HepG2 (cell line): ENCODE measurements at regions of chr17 and their contacts with region 1.

Region 1: GRCh38 chr17:82236142-82236981 is 7.5 kb downstream of the SLC16A3 start:
- DNase-seq: peak; percentile 92
- ATAC-seq: peak; percentile 52
- H3K4me3 ChIP-seq: peak overlapping the region in 1 of 3 experiments; percentile 27; a peak in 1 of 6 replicates
- H3K27ac ChIP-seq: peak overlapping the region; percentile 59
- H3K4me1 ChIP-seq: peaks cover 94% of the 10 kb centered on the region
- H3K27me3 ChIP-seq: no peaks in the 10 kb centered on the region; a peak in 1 of 5 replicates
- CTCF ChIP-seq: peak; percentile 96
- EP300 ChIP-seq: peak in 1 of 2 experiments; percentile 53; a peak in 2 of 4 replicates
- POLR2A ChIP-seq: peak in 1 of 2 experiments; percentile 40; a peak in 1 of 4 replicates
- RAD21 ChIP-seq: peak; percentile 95

Region 2: DNA sequence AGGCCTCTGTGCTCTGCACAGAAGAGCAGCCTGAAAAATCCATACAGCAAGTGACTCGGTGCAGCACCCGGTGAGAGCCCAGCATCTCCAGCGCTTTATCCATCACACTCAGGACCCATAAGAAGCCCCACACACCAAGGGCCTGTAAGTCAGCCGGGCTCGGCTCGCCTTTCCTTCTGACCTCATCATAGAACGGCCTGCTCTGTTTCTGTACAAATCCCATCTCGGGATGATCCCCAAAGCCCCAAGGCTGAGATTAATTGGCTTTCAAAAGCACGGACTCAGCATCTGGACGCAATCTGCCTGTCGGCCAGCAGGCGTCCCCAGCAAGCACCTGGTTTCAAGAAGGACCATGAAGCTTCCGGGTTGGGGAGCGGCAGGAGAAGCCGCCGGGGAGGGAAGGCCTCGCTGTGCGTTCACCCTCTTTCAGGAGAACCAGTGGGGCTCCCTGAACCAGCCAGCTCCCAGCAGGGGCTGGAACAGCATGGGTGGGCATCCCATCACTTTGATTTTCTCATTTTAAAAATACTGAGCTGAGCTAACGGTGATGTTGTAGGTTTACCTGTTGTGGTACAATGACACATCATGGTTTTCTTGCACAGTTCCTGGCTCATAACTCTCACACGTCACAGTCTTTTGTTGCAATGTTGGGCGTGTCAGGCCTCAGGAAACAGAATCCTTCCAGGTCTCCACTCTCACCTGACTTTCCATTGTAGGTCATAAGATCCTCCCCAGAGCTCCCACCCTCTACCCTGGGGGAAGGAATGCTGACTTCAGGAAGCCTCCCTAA is 30.4 kb before region 1 on chr17:
- CTCF ChIA-PET with region 1: interaction called, 7 read pairs
- POLR2A ChIA-PET with region 1: interaction called, 117 read pairs
- in situ Hi-C with region 1: no loop called
- intact Hi-C with region 1: loop called (anchors 2 kb)
- DNase-seq: peak; percentile 84
- ATAC-seq: peak; percentile 91
- H3K4me3 ChIP-seq: peak overlapping the region in 1 of 3 experiments; percentile 33; a peak in 2 of 6 replicates
- H3K27ac ChIP-seq: peak overlapping the region; percentile 26
- H3K4me1 ChIP-seq: peaks cover 20% of the 10 kb centered on the region
- H3K27me3 ChIP-seq: no peaks in the 10 kb centered on the region
- CTCF ChIP-seq: peak; percentile 98
- EP300 ChIP-seq: no peak
- POLR2A ChIP-seq: peak; percentile 66 to 88
- RAD21 ChIP-seq: peak; percentile 89

Region 3: DNA sequence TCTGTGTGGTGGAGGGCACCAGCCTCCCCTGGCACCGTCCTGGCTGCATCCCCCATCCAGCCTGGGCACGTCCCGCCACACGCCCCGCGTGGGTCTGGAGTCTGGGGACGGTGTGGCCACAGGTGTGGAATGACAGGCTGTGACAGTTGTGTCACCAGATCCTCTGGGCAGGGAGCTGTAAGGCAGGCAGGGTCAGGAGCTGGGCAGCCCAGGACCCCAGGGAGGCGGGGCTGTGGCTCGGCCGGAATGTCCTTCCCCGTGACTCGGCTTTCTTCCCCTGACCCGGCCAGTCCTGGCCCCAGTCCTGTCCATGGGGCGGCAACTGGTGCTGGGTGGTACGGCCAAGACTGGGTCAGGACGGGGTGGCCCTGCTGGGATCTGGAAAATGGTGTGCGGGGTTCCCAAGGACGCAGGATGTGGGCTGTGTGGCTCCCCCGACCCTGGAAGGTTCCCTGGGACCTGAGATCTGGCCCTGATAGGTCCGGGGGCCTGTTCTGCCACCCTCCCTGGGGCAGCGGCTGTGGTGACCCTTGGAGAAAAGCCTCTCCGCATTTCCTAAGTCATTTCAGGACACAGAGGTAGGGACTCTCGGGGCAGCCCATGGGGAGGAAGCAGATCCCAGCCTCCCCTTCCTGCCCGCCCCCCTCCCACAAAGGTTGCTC is 10.9 kb before region 1 on chr17:
- CTCF ChIA-PET with region 1: no interaction called
- POLR2A ChIA-PET with region 1: interaction called, 117 read pairs
- in situ Hi-C with region 1: no loop called
- intact Hi-C with region 1: no loop called
- DNase-seq: no peak
- ATAC-seq: peak; percentile 26
- H3K4me3 ChIP-seq: peak overlapping the region; percentile 56 to 77 (median 60)
- H3K27ac ChIP-seq: peak overlapping the region; percentile 19
- H3K4me1 ChIP-seq: peaks cover 61% of the 10 kb centered on the region
- H3K27me3 ChIP-seq: no peaks in the 10 kb centered on the region
- CTCF ChIP-seq: peak; percentile 6; the same call in 1 of the 2 replicates
- EP300 ChIP-seq: no peak
- POLR2A ChIP-seq: peak in 1 of 2 experiments; percentile 32; a peak in 1 of 4 replicates
- RAD21 ChIP-seq: no peak

Region 4: DNA sequence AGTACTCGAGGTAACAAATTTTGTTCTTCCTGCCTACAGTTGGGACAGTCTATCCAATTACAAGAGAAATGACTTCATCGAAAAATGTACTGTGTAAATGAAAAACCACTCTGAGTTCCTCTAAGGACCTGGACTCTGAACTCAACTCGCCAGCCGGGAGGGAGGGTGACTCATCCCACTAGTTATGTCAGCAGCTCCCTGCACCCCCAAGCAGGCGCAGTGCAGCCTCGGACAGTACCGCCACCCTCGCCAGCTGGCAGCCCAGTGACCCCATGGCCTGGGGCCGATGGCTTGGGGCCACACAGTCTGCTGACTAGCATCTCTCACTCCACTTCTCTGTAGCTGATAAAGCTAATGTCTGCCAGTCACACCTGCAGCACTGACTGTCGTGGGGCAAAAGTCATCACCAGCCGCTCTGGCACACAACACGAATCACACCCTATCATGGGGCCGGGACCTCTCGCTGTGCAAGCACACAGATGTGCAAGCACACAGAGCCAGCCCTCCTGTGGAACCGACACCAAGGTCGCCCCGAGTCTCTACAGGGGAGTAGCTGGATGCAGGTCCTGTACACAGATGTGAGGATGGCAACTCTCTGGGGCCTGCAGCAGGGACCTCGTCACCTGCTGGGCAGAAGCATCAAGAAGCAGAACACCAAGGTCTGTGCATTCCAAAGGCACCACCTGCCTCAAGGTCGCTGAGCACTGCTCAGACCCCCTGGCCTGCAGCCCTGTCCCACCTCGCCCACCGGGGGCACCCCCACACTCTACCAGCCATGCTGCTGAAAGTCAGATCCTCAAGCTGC is 31.4 kb after region 1 on chr17:
- CTCF ChIA-PET with region 1: interaction called, 3 read pairs
- POLR2A ChIA-PET with region 1: interaction called, 65 read pairs
- in situ Hi-C with region 1: no loop called
- intact Hi-C with region 1: no loop called
- DNase-seq: peak; percentile 99
- ATAC-seq: peak; percentile 88
- H3K4me3 ChIP-seq: peak overlapping the region; percentile 12 to 65 (median 48); a peak in 5 of 6 replicates
- H3K27ac ChIP-seq: peak overlapping the region; percentile 90
- H3K4me1 ChIP-seq: peaks cover 70% of the 10 kb centered on the region
- H3K27me3 ChIP-seq: no peaks in the 10 kb centered on the region; a peak in 1 of 5 replicates
- CTCF ChIP-seq: peak; percentile 46
- EP300 ChIP-seq: peak; percentile 84 to 90
- POLR2A ChIP-seq: peak in 1 of 2 experiments; percentile 44; a peak in 3 of 4 replicates
- RAD21 ChIP-seq: peak; percentile 44

Region 5: DNA sequence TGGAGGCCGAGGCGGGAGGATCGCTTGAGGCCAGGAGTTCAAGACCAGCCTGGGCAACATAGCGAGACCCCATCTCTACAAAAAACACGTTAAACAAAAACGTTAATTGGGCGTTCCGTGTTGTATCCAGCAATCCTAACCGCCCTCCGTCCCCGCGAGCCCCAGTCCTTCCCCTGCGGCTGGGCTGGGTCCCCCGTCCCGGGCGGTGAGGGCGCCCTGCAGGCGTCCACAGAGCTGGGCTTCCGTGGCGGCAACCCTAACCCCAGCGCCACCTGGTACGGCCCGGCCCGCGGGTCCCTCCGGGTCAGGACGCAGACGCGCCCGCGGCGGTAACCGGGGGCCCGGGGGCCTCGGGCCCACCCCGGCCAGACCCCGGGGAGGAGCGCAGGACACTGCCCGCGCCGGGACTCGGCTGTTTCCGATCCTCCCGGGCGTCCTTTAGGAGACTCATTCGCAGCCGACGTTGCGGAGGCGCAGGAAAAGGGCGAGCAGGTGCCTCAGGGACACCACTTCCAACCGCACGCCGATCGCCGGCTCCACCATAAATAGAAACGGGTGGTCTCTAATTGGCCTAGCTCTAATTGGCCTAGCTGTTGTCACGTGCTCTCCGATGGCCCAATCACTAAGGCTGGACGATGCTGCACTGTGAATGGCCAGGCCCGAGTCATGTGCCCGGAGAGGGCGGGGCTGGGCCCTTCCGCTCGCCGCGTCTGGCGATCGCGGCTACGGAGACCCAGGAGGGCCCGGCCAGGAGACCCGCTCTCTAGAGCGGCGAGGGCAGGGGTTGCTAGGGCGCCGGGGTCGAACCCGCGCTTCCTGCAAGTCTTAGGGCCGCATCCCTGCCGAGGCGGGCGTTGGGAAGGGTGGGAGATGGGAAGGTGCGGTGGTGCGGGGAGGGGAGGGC is 56.1 kb after region 1 on chr17:
- CTCF ChIA-PET with region 1: no interaction called
- POLR2A ChIA-PET with region 1: interaction called, 89 read pairs
- in situ Hi-C with region 1: no loop called
- intact Hi-C with region 1: no loop called
- DNase-seq: peak; percentile 99
- ATAC-seq: peak; percentile 89
- H3K4me3 ChIP-seq: peak overlapping the region; percentile 80 to 87 (median 81)
- H3K27ac ChIP-seq: peak overlapping the region; percentile 93
- H3K4me1 ChIP-seq: peaks cover 88% of the 10 kb centered on the region
- H3K27me3 ChIP-seq: no peaks in the 10 kb centered on the region
- CTCF ChIP-seq: no peak
- EP300 ChIP-seq: peak; percentile 51 to 70
- POLR2A ChIP-seq: peak; percentile 99 to 100
- RAD21 ChIP-seq: peak; percentile 43

Region 6: DNA sequence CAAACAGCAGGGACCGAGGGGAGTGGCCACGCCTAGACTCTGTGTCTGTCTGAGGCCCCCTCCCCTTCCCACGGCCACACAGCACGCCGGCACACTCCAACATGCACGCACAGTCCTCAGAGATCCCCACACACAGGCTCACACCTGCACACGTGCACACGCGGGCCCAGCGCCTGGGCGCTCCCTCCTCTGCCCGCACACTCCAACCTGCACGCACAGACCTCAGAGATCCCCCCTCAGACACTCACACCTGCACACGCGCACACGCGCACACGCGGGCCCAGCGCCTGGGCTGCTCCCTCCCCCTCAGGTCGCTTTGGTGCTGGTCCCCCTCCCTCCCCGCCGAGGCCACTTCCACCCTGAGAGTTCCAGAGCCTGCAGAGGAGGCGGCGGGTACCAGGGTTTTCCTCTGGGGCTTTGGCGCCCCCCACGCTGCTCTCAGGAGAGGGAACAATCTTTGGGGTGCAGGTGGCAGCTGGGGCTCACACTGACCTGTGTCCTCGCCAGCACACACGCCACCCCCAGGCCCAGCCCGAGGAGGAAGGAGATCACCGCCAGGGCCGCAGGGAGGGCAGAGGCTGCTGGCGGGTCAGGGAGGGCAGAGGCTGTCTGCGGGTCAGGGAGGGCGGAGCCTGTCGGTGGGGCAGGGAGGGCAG is 79.5 kb after region 1 on chr17:
- CTCF ChIA-PET with region 1: interaction called, 3 read pairs
- POLR2A ChIA-PET with region 1: interaction called, 17 read pairs
- in situ Hi-C with region 1: loop called (anchors 5 kb)
- intact Hi-C with region 1: no loop called
- DNase-seq: no peak
- ATAC-seq: peak; percentile 3; the same call in 1 of the 3 replicates
- H3K4me3 ChIP-seq: peak overlapping the region in 2 of 3 experiments; percentile 69 to 72; a peak in 3 of 6 replicates
- H3K27ac ChIP-seq: no peak overlapping the region
- H3K4me1 ChIP-seq: peaks cover 56% of the 10 kb centered on the region
- H3K27me3 ChIP-seq: no peaks in the 10 kb centered on the region; a peak in 1 of 5 replicates
- CTCF ChIP-seq: peak; percentile 53
- EP300 ChIP-seq: no peak
- POLR2A ChIP-seq: no peak
- RAD21 ChIP-seq: no peak

Region 7: GRCh38 chr17:82332669-82333278 is 96.4 kb after region 1 on chr17:
- CTCF ChIA-PET with region 1: no interaction called
- POLR2A ChIA-PET with region 1: interaction called, 40 read pairs
- in situ Hi-C with region 1: no loop called
- intact Hi-C with region 1: no loop called
- DNase-seq: no peak
- ATAC-seq: peak; percentile 15
- H3K4me3 ChIP-seq: peak overlapping the region in 2 of 3 experiments; percentile 31 to 35; a peak in 4 of 6 replicates
- H3K27ac ChIP-seq: peak overlapping the region; percentile 9
- H3K4me1 ChIP-seq: peaks cover 90% of the 10 kb centered on the region
- H3K27me3 ChIP-seq: no peaks in the 10 kb centered on the region
- CTCF ChIP-seq: peak; percentile 43
- EP300 ChIP-seq: no peak
- POLR2A ChIP-seq: no peak
- RAD21 ChIP-seq: peak; percentile 42; the same call in 1 of the 2 replicates